ENCODE measurements at regions of chr10 and their contacts with region 1.

Region 1: GRCh38 chr10:77756319-77757232 is 119.0 kb upstream of the KCNMA1 start:
- DNase-seq: no peak
- ATAC-seq: peak; percentile 96
- H3K4me3 ChIP-seq: no peak overlapping the region
- H3K27ac ChIP-seq: no peak overlapping the region
- H3K4me1 ChIP-seq: no peaks in the 10 kb centered on the region
- H3K27me3 ChIP-seq: no peaks in the 10 kb centered on the region; a peak in 1 of 4 replicates
- CTCF ChIP-seq: peak; percentile 79 to 82 (median 80)
- EP300 ChIP-seq: no peak
- POLR2A ChIP-seq: no peak
- RAD21 ChIP-seq: peak; percentile 75

Region 2: GRCh38 chr10:77165445-77166208 is 590.9 kb before region 1 on chr10:
- CTCF ChIA-PET with region 1: interaction called, 5 read pairs
- POLR2A ChIA-PET with region 1: no interaction called
- RAD21 ChIA-PET with region 1: no interaction called
- SMC1A ChIA-PET with region 1: interaction called, 4 read pairs
- in situ Hi-C with region 1: no loop called
- intact Hi-C with region 1: loop called (anchors 2 kb)
- DNase-seq: peak; percentile 24
- ATAC-seq: peak; percentile 95; the same call in 2 of the 3 replicates
- H3K4me3 ChIP-seq: no peak overlapping the region
- H3K27ac ChIP-seq: no peak overlapping the region
- H3K4me1 ChIP-seq: no peaks in the 10 kb centered on the region
- H3K27me3 ChIP-seq: no peaks in the 10 kb centered on the region
- CTCF ChIP-seq: peak; percentile 80 to 87 (median 81); a peak in 5 of 6 replicates
- EP300 ChIP-seq: no peak
- POLR2A ChIP-seq: no peak
- RAD21 ChIP-seq: peak; percentile 82

Region 3: GRCh38 chr10:77716482-77717317 is 39.9 kb before region 1 on chr10:
- CTCF ChIA-PET with region 1: interaction called, 30 read pairs
- POLR2A ChIA-PET with region 1: interaction called, 5 read pairs
- RAD21 ChIA-PET with region 1: interaction called, 12 read pairs
- SMC1A ChIA-PET with region 1: interaction called, 14 read pairs
- in situ Hi-C with region 1: no loop called
- intact Hi-C with region 1: loop called (anchors 1 kb)
- DNase-seq: no peak
- ATAC-seq: no peak
- H3K4me3 ChIP-seq: no peak overlapping the region
- H3K27ac ChIP-seq: no peak overlapping the region
- H3K4me1 ChIP-seq: 0 out of 2 replicates have a peak, but pooled peaks cover under 1% of the 10 kb centered on the region
- H3K27me3 ChIP-seq: no peaks in the 10 kb centered on the region; a peak in 1 of 4 replicates
- CTCF ChIP-seq: no peak
- EP300 ChIP-seq: no peak
- POLR2A ChIP-seq: no peak
- RAD21 ChIP-seq: no peak

Region 4: GRCh38 chr10:77721815-77722214 is 34.8 kb before region 1 on chr10:
- CTCF ChIA-PET with region 1: interaction called, 30 read pairs
- POLR2A ChIA-PET with region 1: interaction called, 5 read pairs
- RAD21 ChIA-PET with region 1: interaction called, 12 read pairs
- SMC1A ChIA-PET with region 1: interaction called, 12 read pairs
- in situ Hi-C with region 1: no loop called
- intact Hi-C with region 1: loop called (anchors 1 kb)
- DNase-seq: no peak
- ATAC-seq: no peak
- H3K4me3 ChIP-seq: no peak overlapping the region
- H3K27ac ChIP-seq: no peak overlapping the region
- H3K4me1 ChIP-seq: no peaks in the 10 kb centered on the region
- H3K27me3 ChIP-seq: no peaks in the 10 kb centered on the region; a peak in 1 of 4 replicates
- CTCF ChIP-seq: no peak
- EP300 ChIP-seq: no peak
- POLR2A ChIP-seq: no peak
- RAD21 ChIP-seq: no peak

Region 5: GRCh38 chr10:77770081-77770867 is 13.7 kb after region 1 on chr10:
- CTCF ChIA-PET with region 1: interaction called, 15 read pairs
- POLR2A ChIA-PET with region 1: no interaction called
- RAD21 ChIA-PET with region 1: interaction called, 4 read pairs
- SMC1A ChIA-PET with region 1: interaction called, 4 read pairs
- in situ Hi-C with region 1: no loop called
- intact Hi-C with region 1: no loop called
- DNase-seq: no peak
- ATAC-seq: no peak
- H3K4me3 ChIP-seq: no peak overlapping the region
- H3K27ac ChIP-seq: no peak overlapping the region
- H3K4me1 ChIP-seq: no peaks in the 10 kb centered on the region
- H3K27me3 ChIP-seq: no peaks in the 10 kb centered on the region; a peak in 1 of 4 replicates
- CTCF ChIP-seq: no peak
- EP300 ChIP-seq: no peak
- POLR2A ChIP-seq: no peak
- RAD21 ChIP-seq: no peak

Region 6: DNA sequence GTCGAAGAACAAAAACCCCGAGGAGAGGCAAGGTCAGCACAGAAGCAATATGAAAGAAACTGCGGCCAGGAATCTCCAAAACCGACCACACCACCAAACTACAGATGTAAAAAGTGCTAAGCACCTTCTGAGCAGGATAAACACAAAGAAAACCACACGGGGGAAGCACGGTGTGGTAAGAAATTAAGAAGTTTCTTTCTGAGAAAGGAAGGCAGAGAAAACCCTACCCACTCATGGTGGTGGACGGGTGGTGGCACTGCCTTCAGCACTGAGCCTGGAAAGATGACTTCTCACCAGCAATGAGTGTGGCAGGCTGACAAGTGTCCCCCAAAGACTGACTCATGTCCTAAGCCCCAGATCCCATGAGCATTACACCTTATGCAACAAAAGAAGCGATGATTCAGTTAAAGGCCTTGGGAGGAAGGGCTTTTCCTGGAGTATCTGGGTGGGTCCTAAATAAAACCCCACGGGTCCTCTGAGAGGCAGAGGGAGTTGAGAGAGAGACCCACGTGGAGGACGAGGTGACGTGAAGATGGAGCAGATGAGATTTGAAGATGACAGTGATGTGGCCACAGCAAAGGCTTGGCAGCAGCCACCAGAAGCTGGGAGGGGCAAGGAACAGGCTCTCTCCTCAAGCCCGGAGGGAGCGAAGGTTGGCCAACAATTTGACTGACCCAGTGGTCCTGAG is 45.0 kb after region 1 on chr10:
- CTCF ChIA-PET with region 1: no interaction called
- POLR2A ChIA-PET with region 1: no interaction called
- RAD21 ChIA-PET with region 1: no interaction called
- SMC1A ChIA-PET with region 1: no interaction called
- in situ Hi-C with region 1: no loop called
- intact Hi-C with region 1: no loop called
- DNase-seq: peak; percentile 53
- ATAC-seq: peak; percentile 95
- H3K4me3 ChIP-seq: no peak overlapping the region
- H3K27ac ChIP-seq: no peak overlapping the region
- H3K4me1 ChIP-seq: peaks cover 4% of the 10 kb centered on the region
- H3K27me3 ChIP-seq: no peaks in the 10 kb centered on the region
- CTCF ChIP-seq: no peak; a peak in 1 of 6 replicates
- EP300 ChIP-seq: peak in 1 of 2 experiments; percentile 43; a peak in 1 of 4 replicates
- POLR2A ChIP-seq: no peak
- RAD21 ChIP-seq: no peak

Region 7: DNA sequence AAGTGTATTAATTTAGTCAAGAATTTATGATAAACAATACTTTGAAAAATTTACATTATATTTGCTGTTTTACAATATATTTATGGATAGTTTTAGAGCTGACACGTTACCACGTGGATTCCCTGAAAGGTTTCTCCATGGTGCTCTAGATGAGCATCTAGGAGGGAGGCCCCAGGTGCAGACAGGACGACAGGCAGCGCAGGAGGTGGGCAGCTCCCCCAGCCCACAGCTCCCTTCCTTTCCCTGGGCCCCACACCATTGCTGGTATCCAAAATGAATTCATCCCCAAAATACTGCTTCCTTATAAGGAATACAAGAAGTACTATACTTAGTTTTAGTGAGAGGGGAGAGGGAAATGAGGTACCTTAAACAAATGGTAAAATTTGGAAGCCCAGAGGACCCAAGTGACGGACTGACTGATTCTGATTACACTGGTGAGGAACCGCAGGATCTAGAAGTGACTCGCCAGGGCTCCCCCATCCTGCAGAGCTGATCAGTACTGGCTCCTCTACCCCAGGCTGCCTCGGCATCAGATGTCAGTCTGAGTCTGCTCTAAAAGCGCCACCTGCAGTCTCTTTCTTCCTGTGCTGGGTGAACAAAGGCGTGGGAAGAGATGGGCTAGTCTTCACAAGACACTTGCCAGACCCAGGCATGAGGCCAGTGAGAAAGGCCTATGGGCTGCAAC is 80.8 kb after region 1 on chr10:
- CTCF ChIA-PET with region 1: interaction called, 13 read pairs
- POLR2A ChIA-PET with region 1: no interaction called
- RAD21 ChIA-PET with region 1: interaction called, 5 read pairs
- SMC1A ChIA-PET with region 1: interaction called, 3 read pairs
- in situ Hi-C with region 1: no loop called
- intact Hi-C with region 1: no loop called
- DNase-seq: peak; percentile 68
- ATAC-seq: peak; percentile 96
- H3K4me3 ChIP-seq: no peak overlapping the region
- H3K27ac ChIP-seq: peak overlapping the region; percentile 57
- H3K4me1 ChIP-seq: peaks cover 11% of the 10 kb centered on the region
- H3K27me3 ChIP-seq: no peaks in the 10 kb centered on the region
- CTCF ChIP-seq: peak; percentile 59 to 94 (median 66); a peak in 5 of 6 replicates
- EP300 ChIP-seq: peak in 1 of 2 experiments; percentile 73; a peak in 3 of 4 replicates
- POLR2A ChIP-seq: no peak
- RAD21 ChIP-seq: peak; percentile 84

Measured in GM12878 (cell line).